ENCODE measurements at regions of chr11 and their contacts with region 1.

Region 1: DNA sequence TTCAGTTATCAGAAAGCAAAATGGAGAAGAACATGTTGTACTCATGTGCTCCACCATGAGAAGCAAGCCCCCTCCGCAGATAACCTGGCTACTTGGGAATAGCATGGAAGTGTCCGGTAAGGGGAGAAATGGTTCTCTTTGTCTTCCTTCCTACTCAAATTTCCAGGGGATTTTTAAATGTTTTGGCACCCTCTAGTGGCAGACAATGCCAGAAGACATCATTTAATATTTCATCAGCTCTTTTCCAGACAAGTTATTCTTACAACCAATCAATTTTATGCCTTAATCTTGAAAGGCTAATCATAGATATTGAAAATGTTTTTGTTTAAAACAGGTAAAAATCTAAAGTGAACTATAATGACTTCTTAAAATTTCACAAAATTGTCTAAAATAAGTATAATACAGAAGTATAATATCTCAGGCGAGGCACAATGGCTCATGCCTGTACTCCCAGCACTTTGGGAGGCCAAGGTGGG is 15.7 kb downstream of the CRTAM start:
- DNase-seq: peak; percentile 79

Region 2: DNA sequence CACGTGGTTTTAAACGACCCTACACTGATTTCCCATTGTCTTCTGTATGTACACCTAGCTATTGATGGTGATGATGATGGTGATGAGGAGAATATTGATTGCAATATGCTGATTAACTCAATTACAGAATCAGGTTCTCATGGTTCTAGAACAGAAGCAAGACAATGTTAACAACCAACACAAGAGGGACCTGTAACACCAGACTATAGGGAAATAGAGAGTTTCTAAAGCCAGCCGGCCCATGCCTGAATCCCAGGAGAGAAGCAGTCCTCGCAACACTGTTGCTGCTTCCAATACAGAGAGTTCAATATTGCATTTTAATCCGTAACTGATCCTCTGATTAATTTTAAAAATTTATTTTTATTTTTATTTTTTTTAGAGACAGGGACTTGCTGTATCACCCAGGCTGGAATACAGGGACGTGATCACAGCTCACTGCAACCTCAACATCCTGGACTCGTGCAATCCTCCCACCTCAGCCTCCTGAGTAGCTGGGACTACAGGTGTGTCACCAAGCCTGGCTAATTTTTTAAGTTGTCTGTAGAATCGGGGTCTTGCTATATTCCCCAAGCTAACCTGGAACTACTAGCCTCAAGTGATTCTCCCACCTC is 220.7 kb before region 1 on chr11:
- in situ Hi-C with region 1: loop called (anchors 10 kb)
- DNase-seq: peak; percentile 45

Region 3: DNA sequence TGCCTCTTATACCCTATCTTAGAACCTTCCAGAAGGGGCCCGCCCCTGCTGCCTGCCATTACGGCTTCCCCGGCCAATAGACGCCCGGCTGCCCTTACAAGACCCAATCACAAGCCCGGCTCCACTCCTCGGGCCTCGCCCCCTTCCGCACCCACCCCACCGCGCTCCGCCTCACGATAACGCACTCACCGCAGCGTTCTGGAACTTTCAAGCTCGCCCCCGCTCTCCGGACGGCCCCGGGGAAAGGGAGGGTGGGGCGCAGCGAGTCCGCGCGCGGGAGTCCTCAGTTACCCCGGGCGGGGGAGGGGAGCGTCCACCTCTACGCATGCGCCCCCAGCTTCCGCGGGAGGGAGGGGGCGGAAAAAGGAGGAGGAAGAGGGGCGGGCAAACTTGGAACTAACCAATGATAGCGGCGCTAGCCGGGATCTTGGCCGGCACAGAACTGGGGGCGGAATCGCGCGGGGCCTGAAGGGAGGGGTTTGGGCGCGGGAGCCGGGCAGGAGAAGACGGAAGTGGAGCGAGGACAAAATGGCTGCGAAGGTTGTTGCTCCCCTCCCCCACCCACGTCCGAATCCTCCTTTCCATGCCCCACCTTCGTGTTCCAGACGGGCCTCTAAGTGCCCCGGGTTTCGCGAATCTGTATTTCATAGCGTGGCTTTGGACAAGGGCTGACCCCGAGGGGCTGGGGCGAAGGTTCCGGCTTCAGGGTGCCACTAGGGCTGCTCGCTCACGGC is 208.3 kb after region 1 on chr11:
- in situ Hi-C with region 1: loop called (anchors 25 kb)
- DNase-seq: peak; percentile 99